ENCODE measurements at regions of chr6 and their contacts with region 1.

Region 1: DNA sequence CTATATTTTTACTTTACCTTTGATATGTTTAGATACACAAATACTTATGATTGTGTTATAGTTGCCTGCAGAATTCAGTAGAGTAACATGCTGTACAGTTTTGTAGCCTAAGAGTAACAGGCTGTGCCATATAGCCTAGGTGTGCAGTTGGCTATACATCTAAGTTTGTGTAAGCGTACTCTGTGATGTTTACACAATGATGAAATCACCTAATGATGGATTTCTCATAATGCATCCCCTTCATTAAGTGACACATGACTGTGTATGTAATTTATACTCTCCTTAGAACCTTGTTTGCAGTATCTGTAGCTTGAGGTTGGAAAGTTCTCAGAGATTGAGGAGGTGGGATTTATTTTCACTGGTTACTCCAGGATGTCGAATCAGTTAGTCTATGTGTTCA is 67.0 kb upstream of the TMEM30A start:
- DNase-seq: no peak
- ATAC-seq: no peak

Region 2: DNA sequence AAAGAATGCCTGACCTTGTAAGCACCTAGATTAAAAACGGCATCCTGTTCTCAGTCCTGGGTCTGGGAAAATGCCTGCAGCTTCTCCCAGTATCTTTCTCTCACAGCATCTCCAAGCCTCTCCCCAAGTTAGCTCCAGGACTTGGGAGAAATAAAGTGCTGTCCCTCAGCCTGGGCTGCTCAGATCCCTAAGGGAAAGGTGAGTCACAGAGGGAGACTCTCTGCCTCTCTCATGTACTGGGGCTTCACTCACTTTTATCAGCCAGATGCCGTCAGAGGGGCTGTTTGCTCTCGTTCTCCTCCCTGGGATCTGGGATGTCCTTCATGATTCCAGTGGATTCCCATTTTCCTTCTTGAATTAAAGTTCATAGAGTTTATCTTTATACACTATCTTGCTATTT is 439.3 kb before region 1 on chr6:
- intact Hi-C with region 1: no loop called
- DNase-seq: no peak
- ATAC-seq: no peak

Region 3: DNA sequence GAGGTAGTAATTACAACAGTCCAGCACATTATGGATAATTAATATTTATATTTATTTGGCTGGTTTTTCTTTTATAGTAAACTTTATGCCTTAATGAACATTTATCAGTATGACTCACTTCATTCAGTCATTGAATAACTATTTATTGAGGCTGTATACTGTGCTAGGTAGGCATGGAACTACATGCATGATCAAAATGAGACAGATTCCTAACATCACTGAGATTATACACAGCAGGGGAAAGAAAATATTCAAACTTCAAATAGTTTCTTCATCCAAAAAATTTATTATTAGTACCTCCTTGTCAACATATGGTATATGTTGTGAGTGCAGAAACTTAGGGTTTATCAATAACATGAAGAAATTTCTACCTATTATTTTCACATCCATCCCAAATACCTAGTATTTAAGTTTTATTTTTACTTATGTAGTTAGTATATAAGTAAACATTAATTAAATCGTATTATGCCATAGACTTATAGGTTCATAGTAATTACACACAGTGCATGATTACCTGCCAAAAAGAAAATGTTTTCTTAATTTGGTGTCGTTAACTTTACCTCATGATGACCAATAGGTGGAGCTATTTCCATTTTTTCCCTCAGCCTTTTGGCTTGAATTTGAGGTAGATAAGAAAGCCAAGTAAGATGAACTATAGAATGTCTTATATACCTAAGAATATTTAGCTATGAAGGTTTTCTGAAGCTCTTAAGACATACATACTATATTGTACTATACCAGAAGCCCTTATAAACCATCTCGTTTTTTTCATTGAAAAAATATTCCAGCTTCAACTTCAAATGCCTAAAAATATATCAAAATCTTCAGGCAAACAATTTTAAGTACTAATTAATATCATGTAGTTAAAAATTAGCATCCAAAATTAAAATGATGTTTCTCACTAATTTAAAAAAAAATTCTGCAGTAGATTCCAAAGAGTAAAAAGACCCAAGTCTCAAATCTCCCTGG is 54.4 kb before region 1 on chr6:
- intact Hi-C with region 1: loop called (anchors 5 kb)
- DNase-seq: no peak
- ATAC-seq: peak; percentile 43

Region 4: DNA sequence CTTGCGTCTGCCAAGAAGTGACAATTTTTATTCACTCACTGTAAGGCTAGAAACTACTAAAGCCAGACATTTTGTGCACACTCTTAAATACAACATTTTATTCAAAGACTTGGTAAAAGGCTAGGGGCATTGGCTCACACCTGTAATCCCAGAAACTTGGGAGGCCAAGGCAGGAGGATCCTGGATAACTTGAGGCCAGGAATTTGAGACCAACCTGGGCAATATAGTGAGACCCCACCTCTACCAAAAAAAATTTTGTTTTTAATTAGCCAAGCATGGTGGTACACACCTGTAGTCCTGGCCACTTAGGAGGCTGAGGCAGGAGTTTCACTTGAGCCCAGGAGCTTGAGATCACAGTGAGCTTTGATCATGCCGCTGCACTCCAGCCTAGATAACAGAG is 238.8 kb after region 1 on chr6:
- intact Hi-C with region 1: no loop called
- DNase-seq: no peak
- ATAC-seq: no peak

Measured in left ventricle myocardium superior (tissue), 1 donor.